ENCODE measurements at regions of chr4 and their contacts with region 1.

Region 1: DNA sequence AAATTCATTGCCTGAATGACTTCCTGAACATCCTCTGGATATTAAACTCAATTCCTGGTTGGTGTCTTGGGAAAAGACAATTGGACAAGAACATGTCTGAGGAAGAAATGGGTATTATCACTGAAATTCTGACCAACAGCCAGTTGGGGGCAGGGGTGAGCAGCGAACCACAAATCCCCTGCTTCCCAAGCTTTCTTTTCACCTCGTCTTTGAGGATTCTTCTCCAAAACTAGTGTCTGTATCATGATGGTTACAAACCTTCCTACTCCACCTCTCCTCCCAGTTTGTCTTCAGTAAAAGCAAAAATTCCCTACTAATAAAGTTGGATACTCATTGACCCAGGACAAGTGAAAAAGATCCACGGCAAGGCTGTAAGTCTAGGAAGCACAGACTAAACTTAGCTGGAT is 48.3 kb upstream of the WDR1 start:
- DNase-seq: peak; percentile 42
- ATAC-seq: no peak
- H3K4me3 Mint-ChIP-seq: no peak overlapping the region
- H3K27ac Mint-ChIP-seq: no peak overlapping the region
- H3K4me1 Mint-ChIP-seq: peaks cover 22% of the 10 kb centered on the region
- H3K27me3 Mint-ChIP-seq: peaks cover 2% of the 10 kb centered on the region
- CTCF ChIP-seq: peak; percentile 82

Region 2: GRCh38 chr4:10239982-10240654 is 75.2 kb after region 1 on chr4:
- CTCF ChIA-PET with region 1: no interaction called
- POLR2A ChIA-PET with region 1: no interaction called
- intact Hi-C with region 1: no loop called
- DNase-seq: no peak
- ATAC-seq: no peak
- H3K4me3 Mint-ChIP-seq: no peak overlapping the region
- H3K27ac Mint-ChIP-seq: no peak overlapping the region
- H3K4me1 Mint-ChIP-seq: no peaks in the 10 kb centered on the region
- H3K27me3 Mint-ChIP-seq: no peaks in the 10 kb centered on the region
- CTCF ChIP-seq: no peak

Region 3: DNA sequence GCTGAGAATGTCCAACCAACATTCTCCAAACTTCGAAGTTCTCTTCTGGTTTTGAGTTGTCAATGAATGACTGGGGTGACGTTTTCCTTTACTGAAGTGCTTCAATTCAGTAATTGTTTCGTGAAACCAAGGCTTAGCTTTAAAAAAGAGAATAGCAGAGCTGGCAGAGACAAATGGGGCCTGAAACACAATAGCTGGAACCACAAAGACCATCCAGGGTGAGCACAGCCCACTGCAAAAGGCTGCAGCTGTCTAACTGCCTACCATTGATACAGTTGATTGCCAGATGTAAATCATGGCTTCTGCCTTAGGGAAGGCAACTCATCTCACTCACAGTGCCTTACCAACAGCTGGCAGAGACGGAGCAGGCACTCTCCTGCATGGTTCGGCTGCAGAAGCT is 371.0 kb after region 1 on chr4:
- CTCF ChIA-PET with region 1: interaction called, 34 read pairs
- POLR2A ChIA-PET with region 1: no interaction called
- intact Hi-C with region 1: no loop called
- DNase-seq: no peak
- ATAC-seq: no peak
- H3K4me3 Mint-ChIP-seq: no peak overlapping the region
- H3K27ac Mint-ChIP-seq: no peak overlapping the region
- H3K4me1 Mint-ChIP-seq: no peaks in the 10 kb centered on the region
- H3K27me3 Mint-ChIP-seq: no peaks in the 10 kb centered on the region
- CTCF ChIP-seq: no peak

Region 4: GRCh38 chr4:10554694-10555093 is 389.8 kb after region 1 on chr4:
- CTCF ChIA-PET with region 1: interaction called, 12 read pairs
- POLR2A ChIA-PET with region 1: no interaction called
- intact Hi-C with region 1: loop called (anchors 5 kb)
- DNase-seq: peak; percentile 65
- ATAC-seq: peak; percentile 69
- H3K4me3 Mint-ChIP-seq: no peak overlapping the region
- H3K27ac Mint-ChIP-seq: no peak overlapping the region
- H3K4me1 Mint-ChIP-seq: peaks cover 6% of the 10 kb centered on the region
- H3K27me3 Mint-ChIP-seq: peaks cover 6% of the 10 kb centered on the region
- CTCF ChIP-seq: peak; percentile 78

Measured in activated CD8-positive, alpha-beta T cell treated with anti-CD3 and anti-CD28 coated beads for 36 hours (primary cell).